Activated T-helper 1 cell treated with anti-CD3 and anti-CD28 coated beads, Interleukin-12 subunit alpha, Interleukin-12 subunit beta, Interleukin-2, Interleukin-4 antibody, amounts not matched to agents 30 ng/mL and 10 ng/mL and 1 ng/mL, durations not matched to agents 14 hours and 24 hours and 36 hours (primary cell): ENCODE measurements at regions of chr19 and their contacts with region 1.

Region 1: DNA sequence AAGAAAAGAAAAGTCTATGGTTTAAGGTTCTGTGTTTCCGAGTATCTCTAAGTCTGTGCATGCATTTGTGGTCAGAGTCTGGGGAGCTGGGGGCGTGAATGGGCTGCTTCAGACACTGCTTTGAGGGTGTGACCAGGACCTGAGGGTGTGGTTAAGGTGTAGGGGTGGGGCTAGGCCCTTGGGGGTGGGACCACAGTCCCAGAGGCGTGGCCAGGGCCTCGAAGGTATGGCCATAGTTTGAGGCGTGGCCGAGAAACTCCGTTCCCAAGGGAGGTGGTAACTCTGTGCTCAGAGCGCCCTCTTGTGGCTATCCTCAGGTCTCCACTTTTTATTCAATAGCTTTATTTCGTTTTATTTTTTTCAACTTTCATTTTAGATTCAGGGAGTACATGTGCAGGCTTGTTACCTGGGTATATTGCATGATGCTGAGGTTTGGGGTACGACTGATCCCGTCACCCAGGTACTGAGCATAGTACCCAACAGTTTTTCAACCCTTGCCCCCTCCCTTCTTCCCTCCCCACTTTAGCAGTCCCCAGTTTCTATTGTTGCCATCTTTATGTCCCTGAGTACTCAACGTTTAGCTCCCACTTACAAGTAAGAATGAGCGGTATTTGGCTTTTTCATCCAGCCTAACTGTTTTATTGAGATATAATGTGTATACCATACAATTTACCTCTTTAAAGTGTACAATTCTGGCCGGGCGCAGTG is 7.0 kb upstream of the CBLC start:
- DNase-seq: peak; percentile 94
- H3K4me3 Mint-ChIP-seq: peak overlapping the region; percentile 27
- H3K27ac Mint-ChIP-seq: peak overlapping the region; percentile 64
- H3K4me1 Mint-ChIP-seq: peaks cover 30% of the 10 kb centered on the region
- H3K27me3 Mint-ChIP-seq: peaks cover 2% of the 10 kb centered on the region

Region 2: DNA sequence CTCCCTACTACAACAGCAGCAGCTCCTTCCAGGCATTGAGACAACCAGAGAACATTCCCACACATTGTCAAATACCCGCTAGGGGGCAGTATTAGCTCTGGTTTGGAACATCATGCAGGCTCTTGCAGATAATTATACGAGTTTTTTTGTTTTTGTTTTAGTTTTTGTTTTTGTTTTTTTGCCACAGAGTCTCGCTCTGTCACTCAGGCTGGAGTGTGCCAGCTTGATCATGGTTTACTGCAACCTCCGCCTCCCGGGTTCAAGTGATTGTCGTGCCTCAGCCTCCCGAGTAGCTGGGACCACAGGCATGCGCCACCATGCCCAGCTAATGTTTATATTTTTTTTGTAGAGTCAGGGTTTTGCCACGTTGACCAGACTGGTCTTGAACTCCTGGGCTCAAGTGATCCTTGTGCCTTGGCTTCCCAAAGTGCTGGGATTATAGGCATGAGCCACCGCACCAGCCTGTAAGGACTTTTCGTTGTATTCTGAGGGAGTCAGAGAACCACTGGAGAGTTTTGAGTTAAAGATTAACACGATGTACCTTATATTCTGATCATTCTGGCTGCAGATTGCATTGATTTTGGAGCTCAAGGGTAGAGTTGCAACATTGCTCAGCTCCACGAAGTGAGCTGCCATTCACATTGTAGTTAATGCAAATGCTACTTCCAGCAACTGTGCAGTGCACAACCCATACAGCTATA is 199.6 kb before region 1 on chr19:
- intact Hi-C with region 1: loop called (anchors 2 kb)
- DNase-seq: peak; percentile 34
- H3K4me3 Mint-ChIP-seq: no peak overlapping the region
- H3K27ac Mint-ChIP-seq: no peak overlapping the region
- H3K4me1 Mint-ChIP-seq: no peaks in the 10 kb centered on the region
- H3K27me3 Mint-ChIP-seq: peaks cover 1% of the 10 kb centered on the region

Region 3: DNA sequence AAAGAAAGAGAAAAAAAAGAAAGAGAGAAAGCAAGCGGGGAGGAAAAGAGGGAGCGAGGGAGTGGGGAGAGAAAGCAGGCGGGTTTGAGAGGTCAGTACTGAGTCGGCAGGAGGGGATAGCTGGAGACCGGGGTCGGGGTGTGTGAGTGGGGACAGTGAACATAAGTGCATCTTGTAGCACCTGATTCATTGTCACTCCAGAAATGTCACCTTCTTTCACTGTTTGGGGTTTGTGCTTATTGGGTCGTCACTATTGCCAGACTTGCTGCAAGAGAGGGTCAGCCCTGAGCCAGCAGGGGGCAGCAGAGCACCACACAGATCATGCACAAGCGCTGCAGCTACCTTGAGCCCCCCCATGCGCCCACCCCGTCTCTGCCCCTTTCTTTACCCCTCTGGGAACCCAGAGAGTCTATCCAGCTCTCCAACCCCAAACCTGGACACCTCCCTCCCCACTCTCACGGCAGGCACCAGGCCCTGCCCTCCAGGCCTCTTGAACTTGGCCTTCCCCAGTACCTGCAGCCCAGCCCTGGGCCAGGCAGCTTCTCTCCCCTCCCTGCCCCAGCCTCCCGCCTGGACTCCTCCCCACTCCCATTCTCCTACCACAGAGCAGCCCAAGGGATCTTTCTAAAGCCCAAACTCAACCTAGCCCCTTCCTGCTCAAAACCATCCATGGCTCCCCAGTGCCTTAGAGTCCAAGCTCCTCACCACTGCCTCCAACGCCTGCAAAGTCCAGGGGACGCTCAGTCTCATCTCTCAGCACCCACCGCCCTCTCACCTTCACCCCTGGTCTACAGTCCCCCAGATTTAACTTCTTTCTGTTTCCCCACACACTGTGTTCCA is 81.4 kb before region 1 on chr19:
- intact Hi-C with region 1: loop called (anchors 1 kb)
- DNase-seq: peak; percentile 65
- H3K4me3 Mint-ChIP-seq: no peak overlapping the region
- H3K27ac Mint-ChIP-seq: peak overlapping the region; percentile 6
- H3K4me1 Mint-ChIP-seq: peaks cover 56% of the 10 kb centered on the region
- H3K27me3 Mint-ChIP-seq: peaks cover 11% of the 10 kb centered on the region

Region 4: DNA sequence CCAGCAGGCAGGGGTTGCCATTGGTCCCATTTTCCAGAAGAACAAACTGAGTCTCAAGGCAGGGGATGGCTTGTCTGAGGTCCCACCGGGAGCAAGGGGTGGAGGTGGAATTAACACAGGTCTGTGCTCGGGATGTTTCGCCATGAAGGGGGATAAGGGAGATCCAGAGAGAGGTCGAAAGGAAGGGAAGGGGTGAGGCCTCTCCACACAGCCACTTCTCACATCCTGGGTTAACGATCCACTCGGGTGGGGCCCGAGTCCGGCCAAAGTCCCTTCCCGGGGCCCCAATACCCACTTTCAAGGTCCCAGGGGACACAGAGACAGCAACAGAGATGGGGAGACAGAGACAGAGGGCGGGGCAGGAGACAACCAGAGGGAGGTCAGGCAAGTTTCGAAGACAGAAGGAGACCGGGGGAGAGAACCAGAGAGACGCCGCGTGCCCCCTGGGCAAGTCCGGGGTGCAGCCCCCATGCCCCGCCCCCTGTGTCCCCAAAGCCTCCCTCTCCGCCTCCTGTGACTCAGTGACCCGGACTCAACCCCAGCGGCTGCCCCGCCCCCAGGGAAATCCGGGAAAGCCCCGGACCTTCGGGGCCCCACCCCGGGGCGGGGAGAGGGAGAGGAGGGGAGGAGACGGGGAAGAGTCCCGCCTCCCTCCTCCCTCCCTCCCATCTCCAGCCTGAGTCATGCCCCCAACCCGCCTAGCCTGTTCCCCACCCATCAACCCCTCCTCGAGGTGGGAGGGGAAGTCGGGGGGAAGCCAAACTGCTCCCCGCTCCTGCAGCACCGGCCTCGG is 23.6 kb before region 1 on chr19:
- intact Hi-C with region 1: loop called (anchors 1 kb)
- DNase-seq: peak; percentile 87
- H3K4me3 Mint-ChIP-seq: peak overlapping the region; percentile 93
- H3K27ac Mint-ChIP-seq: peak overlapping the region; percentile 97
- H3K4me1 Mint-ChIP-seq: peaks cover 48% of the 10 kb centered on the region
- H3K27me3 Mint-ChIP-seq: no peaks in the 10 kb centered on the region

Region 5: DNA sequence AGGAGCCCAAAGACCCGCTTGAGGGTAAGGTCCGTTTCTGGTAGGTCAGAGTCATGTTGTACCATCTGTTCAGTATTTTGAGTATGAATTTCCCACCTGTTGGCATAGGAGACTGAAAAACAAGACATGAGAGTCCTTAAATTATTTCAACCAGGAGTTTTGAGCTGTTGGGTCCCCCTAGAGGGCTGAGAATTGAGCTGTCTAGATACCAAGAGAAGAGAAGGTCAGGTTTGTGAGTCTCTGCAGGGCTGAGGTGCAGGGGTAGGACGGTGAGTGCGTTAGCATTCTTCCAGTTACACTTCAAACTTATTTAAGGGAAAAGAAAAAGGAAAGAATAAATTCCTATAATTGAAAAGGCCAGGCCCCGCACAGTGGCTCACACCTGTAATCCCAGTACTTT is 12.0 kb after region 1 on chr19:
- intact Hi-C with region 1: no loop called
- DNase-seq: no peak
- H3K4me3 Mint-ChIP-seq: no peak overlapping the region
- H3K27ac Mint-ChIP-seq: no peak overlapping the region
- H3K4me1 Mint-ChIP-seq: no peaks in the 10 kb centered on the region
- H3K27me3 Mint-ChIP-seq: peaks cover 2% of the 10 kb centered on the region

Region 6: GRCh38 chr19:44820648-44821609 is 50.2 kb after region 1 on chr19:
- intact Hi-C with region 1: no loop called
- DNase-seq: no peak
- H3K4me3 Mint-ChIP-seq: no peak overlapping the region
- H3K27ac Mint-ChIP-seq: no peak overlapping the region
- H3K4me1 Mint-ChIP-seq: no peaks in the 10 kb centered on the region
- H3K27me3 Mint-ChIP-seq: peaks cover 6% of the 10 kb centered on the region

Region 7: DNA sequence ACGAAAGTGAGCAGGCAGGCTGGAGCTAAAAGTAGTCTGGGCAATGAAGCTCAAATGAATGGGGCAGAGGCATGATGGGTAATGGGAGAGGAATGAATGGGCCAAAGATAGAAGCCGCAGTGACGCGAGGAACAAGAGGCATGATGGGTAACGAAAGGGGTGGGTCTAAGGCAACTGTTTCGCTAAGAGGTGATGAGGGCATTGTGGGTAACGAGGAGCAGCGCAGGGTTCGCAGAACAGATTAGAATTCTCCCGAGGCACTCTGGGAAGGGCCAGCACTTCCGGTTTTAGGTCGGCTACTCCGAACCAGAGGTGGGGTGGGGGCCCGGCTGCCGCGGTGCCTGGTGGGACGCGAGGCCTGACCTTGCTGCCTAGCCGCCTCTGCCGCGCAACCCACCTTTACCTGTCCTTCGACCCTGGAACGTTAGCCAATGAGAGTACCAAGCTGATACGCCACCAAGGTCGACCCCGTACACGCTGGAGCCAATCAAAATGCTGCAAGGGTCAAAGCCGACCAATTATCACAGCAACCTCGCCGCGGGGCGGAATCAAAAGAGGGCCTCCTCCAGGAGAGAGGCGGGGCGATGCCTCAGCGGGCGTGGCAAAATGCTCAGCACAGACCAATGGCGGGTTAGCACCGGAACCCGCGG is 119.8 kb after region 1 on chr19:
- intact Hi-C with region 1: loop called (anchors 1 kb)
- DNase-seq: peak; percentile 100
- H3K4me3 Mint-ChIP-seq: peak overlapping the region; percentile 86
- H3K27ac Mint-ChIP-seq: peak overlapping the region; percentile 96
- H3K4me1 Mint-ChIP-seq: peaks cover 30% of the 10 kb centered on the region
- H3K27me3 Mint-ChIP-seq: no peaks in the 10 kb centered on the region